ENCODE measurements at regions of chr2 and their contacts with region 1.

Region 1: GRCh38 chr2:227884511-227884947 is 13.1 kb downstream of the DAW1 start:
- DNase-seq: peak; percentile 84 to 93
- H3K4me3 ChIP-seq: no peak overlapping the region
- H3K27ac ChIP-seq: no peak overlapping the region
- H3K4me1 ChIP-seq: no peaks in the 10 kb centered on the region
- H3K27me3 ChIP-seq: no peaks in the 10 kb centered on the region
- CTCF ChIP-seq: peak; percentile 94 to 98 (median 97)
- EP300 ChIP-seq: no peak
- POLR2A ChIP-seq: no peak
- RAD21 ChIP-seq: peak; percentile 67 to 78

Region 2: GRCh38 chr2:227684276-227684675 is 200.3 kb before region 1 on chr2:
- CTCF ChIA-PET with region 1: no interaction called
- POLR2A ChIA-PET with region 1: no interaction called
- DNase-seq: no peak
- H3K4me3 ChIP-seq: no peak overlapping the region
- H3K27ac ChIP-seq: no peak overlapping the region
- H3K4me1 ChIP-seq: no peaks in the 10 kb centered on the region
- H3K27me3 ChIP-seq: no peaks in the 10 kb centered on the region
- CTCF ChIP-seq: no peak
- EP300 ChIP-seq: no peak
- POLR2A ChIP-seq: no peak
- RAD21 ChIP-seq: no peak

Region 3: DNA sequence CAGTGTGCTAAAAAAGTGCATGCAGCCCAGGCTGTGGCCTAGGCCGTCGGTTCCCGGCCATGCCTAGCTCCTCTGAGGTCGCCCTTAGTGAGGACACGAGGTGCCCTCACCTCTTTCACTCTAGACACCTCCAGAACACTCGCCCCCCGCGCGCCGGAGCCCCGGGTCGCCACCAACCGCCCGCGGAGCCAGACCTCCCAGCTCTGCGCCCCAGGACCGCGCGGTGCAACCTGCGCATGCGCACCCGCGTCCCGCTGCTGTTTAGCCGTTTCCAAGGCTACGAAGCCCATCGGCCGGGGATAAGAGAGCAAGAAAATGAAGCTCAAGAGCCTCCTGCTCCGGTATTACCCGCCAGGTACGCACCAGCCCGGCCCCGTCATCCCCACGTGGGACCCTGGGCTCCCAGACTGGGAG is 13.1 kb before region 1 on chr2 and contains the start of gene DAW1:
- CTCF ChIA-PET with region 1: interaction called, 14 read pairs
- POLR2A ChIA-PET with region 1: no interaction called
- DNase-seq: peak in 1 of 2 experiments; percentile 90
- H3K4me3 ChIP-seq: peak within 1 kb of the TSS; percentile 42 to 59 (median 52)
- H3K27ac ChIP-seq: no peak within 1 kb of the TSS
- H3K4me1 ChIP-seq: peaks cover 0 to 5% (median 3%) of the 10 kb centered on the region in 4 experiments; a peak in 4 of 7 replicates
- H3K27me3 ChIP-seq: no peaks in the 10 kb centered on the region
- CTCF ChIP-seq: no peak
- EP300 ChIP-seq: no peak
- POLR2A ChIP-seq: peak in 1 of 2 experiments; percentile 41; a peak in 2 of 3 replicates
- RAD21 ChIP-seq: no peak
- total RNA-seq, gene DAW1: 0.84 and 1.4 TPM in 2 replicates